Adrenal gland (tissue), 19 donors: ENCODE measurements at regions of chr2 and their contacts with region 1.

Region 1: GRCh38 chr2:9813312-9814133 is 29.8 kb upstream of the TAF1B start:
- DNase-seq: peak; percentile 60 to 86 (median 75)
- H3K4me3 ChIP-seq: peak overlapping the region in 1 of 4 donors; percentile 23
- H3K27ac ChIP-seq: no peak overlapping the region
- H3K4me1 ChIP-seq: no peaks in the 10 kb centered on the region
- H3K27me3 ChIP-seq: no peaks in the 10 kb centered on the region
- CTCF ChIP-seq: peak; percentile 84 to 93 (median 90)
- POLR2A ChIP-seq: no peak

Region 2: DNA sequence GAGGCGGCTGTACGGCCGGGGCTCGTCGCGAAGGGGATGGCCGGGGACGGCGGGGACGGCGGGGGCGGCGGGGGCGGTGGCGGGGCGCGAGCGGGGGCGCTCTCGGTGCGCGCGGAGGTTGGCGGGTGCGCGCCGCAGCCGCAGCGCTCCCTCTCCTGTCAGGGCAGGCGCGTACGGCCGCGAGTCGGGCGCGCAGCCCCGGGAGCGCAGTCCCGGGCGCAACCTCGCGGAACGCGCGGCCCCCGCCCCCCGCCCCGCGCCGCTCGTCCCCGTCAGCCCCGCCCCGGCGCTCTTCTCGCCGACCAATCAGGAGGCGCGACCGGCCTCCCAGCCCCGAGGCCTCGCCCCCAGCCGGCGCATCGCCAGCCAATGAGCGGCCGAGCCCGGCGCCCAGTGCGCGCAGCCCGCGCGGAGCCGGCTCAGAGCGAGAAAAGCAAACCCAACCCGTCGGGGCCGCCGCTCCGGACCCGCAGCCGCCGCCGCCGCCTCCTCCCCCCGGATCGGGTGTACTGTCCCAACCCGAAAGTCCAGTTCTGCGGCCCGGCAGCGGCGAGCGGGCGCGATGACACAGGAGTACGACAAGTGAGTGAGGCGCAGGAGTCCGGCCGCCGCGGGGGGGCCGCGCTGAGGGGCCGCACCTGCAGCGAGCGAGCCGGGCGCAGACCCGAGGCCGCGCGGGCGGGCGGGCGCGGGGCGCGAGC is 137.9 kb after region 1 on chr2 and contains the start of gene GRHL1:
- intact Hi-C with region 1: loop called in 1 of 2 experiments (anchors 5 kb)
- DNase-seq: peak; percentile 89 to 95 (median 94)
- H3K4me3 ChIP-seq: peak within 1 kb of the TSS; percentile 45 to 89 (median 60)
- H3K27ac ChIP-seq: peak within 1 kb of the TSS in 3 of 5 donors; percentile 47 to 84 (median 72)
- H3K4me1 ChIP-seq: peaks cover 0 to 25% of the 10 kb centered on the region in 2 donors
- H3K27me3 ChIP-seq: no peaks in the 10 kb centered on the region
- CTCF ChIP-seq: no peak
- POLR2A ChIP-seq: peak in 1 of 2 donors; percentile 76
- total RNA-seq, gene GRHL1: 0.57 to 2.6 (median 1.3) TPM in 8 of 9 donors, not detected in the other

Region 3: GRCh38 chr2:10048501-10049171 is 235.1 kb after region 1 on chr2:
- intact Hi-C with region 1: loop called (anchors 5 to 10 kb)
- DNase-seq: peak in 1 of 7 donors; percentile 43
- H3K4me3 ChIP-seq: no peak overlapping the region
- H3K27ac ChIP-seq: peak overlapping the region in 2 of 5 donors; percentile 44
- H3K4me1 ChIP-seq: peaks cover 16 to 32% of the 10 kb centered on the region in 2 donors
- H3K27me3 ChIP-seq: no peaks in the 10 kb centered on the region
- CTCF ChIP-seq: peak; percentile 33 to 87 (median 63)
- POLR2A ChIP-seq: no peak

Region 4: DNA sequence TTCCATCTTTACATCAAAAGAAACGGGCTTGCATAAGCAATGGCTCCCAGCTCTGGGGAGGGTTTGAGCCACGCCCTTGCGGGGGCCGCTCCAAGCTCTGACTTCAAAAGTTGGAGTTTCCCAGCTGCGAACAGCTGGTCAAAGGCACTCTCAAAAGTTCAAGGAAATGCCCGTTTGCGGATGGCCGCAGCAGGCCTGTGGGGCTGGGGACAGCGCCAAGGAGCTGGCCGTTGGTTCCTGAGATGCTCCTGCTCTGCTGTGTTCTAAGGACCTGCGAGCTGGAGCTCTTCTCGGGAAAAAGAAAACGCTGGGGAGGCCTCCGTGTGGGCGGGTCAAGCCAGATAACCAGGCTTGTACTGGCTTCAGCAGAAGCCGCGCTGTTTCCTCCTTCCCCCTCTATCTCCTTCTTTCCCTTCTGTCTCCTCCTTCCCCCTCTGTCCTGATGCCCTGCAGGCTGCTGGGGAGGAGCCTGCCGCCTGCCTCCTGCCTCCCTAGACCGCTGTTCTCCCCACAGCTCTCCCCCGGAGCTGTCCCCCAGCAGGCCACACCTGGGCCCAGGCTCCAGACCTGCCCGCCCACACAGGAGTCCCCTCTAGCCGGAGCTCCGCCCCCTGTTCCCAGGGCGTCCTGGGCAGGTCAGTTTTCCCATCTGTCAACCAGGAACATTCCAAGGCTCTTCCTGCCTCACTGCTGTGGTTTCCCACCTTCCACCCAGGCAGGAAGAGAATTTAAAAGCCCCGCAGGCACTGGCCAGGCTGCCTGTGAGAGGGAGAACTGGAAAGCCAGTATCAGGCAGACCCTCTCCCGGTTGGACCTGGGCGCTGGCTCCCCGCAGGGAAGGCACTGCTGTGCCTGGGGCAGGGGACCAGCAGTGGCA is 243.9 kb after region 1 on chr2:
- intact Hi-C with region 1: loop called in 1 of 2 experiments (anchors 10 kb)
- DNase-seq: peak in 6 of 7 donors; percentile 54 to 72 (median 64)
- H3K4me3 ChIP-seq: peak overlapping the region in 1 of 4 donors; percentile 28
- H3K27ac ChIP-seq: peak overlapping the region in 3 of 5 donors; percentile 17 to 70 (median 56)
- H3K4me1 ChIP-seq: peaks cover 0 to 10% of the 10 kb centered on the region in 2 donors
- H3K27me3 ChIP-seq: no peaks in the 10 kb centered on the region
- CTCF ChIP-seq: no peak
- POLR2A ChIP-seq: no peak

Region 5: GRCh38 chr2:10097352-10098148 is 284.0 kb after region 1 on chr2:
- intact Hi-C with region 1: loop called in 1 of 2 experiments (anchors 5 kb)
- DNase-seq: peak; percentile 52 to 80 (median 72)
- H3K4me3 ChIP-seq: no peak overlapping the region
- H3K27ac ChIP-seq: no peak overlapping the region
- H3K4me1 ChIP-seq: no peaks in the 10 kb centered on the region
- H3K27me3 ChIP-seq: peaks cover 6% of the 10 kb centered on the region
- CTCF ChIP-seq: peak; percentile 84 to 94 (median 88)
- POLR2A ChIP-seq: no peak

Region 6: DNA sequence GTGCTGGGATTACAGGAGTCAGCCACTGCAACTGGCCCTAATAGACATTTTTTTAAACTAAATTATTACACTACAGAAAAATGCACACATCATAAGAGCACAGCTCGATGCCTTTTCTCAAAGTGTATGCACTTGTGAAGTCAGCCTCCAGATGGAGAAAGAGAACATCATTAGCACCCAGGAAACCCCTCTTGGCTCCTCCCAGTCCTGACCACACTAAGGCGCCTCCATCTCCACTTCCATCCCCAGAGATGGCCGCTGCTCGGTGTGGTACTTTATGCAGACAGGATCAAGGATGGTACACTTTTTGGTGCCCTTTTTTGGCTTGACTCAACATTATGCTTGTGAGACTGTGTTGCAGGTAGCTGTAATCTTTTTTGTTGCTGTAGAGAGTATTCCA is 343.8 kb after region 1 on chr2:
- intact Hi-C with region 1: no loop called
- DNase-seq: no peak
- H3K4me3 ChIP-seq: no peak overlapping the region
- H3K27ac ChIP-seq: no peak overlapping the region
- H3K4me1 ChIP-seq: no peaks in the 10 kb centered on the region
- H3K27me3 ChIP-seq: no peaks in the 10 kb centered on the region
- CTCF ChIP-seq: no peak
- POLR2A ChIP-seq: no peak

Region 7: GRCh38 chr2:10514743-10515142 is 701.2 kb after region 1 on chr2:
- intact Hi-C with region 1: no loop called
- DNase-seq: no peak
- H3K4me3 ChIP-seq: no peak overlapping the region
- H3K27ac ChIP-seq: no peak overlapping the region
- H3K4me1 ChIP-seq: no peaks in the 10 kb centered on the region
- H3K27me3 ChIP-seq: no peaks in the 10 kb centered on the region
- CTCF ChIP-seq: no peak
- POLR2A ChIP-seq: no peak